Naive thymus-derived CD4-positive, alpha-beta T cell (primary cell): ENCODE measurements at regions of chr3 and their contacts with region 1.

Region 1: DNA sequence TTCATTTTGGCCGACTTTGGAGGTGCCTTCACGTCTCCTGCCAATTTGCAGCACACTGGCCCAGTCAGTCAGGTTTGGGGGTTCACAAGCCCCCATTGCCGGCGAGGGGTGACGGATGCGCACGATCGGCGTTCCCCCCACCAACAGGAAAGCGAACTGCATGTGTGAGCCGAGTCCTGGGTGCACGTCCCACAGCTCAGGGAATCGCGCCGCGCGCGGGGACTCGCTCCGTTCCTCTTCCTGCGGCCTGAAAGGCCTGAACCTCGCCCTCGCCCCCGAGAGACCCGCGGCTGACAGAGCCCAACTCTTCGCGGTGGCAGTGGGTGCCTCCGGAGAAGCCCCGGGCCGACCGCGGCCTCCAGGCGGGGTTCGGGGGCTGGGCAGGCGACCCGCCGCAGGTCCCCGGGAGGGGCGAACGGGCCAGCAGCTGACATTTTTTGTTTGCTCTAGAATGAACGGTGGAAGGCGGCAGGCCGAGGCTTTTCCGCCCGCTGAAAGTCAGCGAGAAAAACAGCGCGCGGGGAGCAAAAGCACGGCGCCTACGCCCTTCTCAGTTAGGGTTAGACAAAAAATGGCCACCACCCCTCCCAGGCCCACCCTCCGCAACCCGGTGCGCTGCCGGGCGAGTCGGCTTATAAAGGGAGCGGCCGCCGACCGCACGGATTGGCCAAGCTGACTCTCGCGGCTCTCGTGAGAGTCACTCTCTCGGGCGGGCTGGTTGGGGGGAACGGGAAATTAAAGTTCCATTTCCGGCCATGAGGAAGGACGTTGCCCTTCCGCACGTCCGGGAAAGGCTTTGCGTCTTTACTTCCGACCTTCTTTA is at the start of gene TERC:
- DNase-seq: peak; percentile 72 to 96 (median 94)
- ATAC-seq: peak; percentile 91
- H3K4me3 ChIP-seq: peak within 1 kb of the TSS; percentile 88
- H3K4me3 Mint-ChIP-seq: peak within 1 kb of the TSS; percentile 89 to 99 (median 98)
- H3K27ac ChIP-seq: peak within 1 kb of the TSS; percentile 98
- H3K27ac Mint-ChIP-seq: peak within 1 kb of the TSS; percentile 96 to 100 (median 99)
- H3K4me1 ChIP-seq: peaks cover 11 to 18% of the 10 kb centered on the region in 2 donors
- H3K4me1 Mint-ChIP-seq: peaks cover 6 to 39% (median 33%) of the 10 kb centered on the region in 7 donors
- H3K27me3 ChIP-seq: no peaks in the 10 kb centered on the region
- H3K27me3 Mint-ChIP-seq: no peaks in the 10 kb centered on the region
- total RNA-seq, gene TERC: 4.0 to 19.4 (median 7.4) TPM

Region 2: DNA sequence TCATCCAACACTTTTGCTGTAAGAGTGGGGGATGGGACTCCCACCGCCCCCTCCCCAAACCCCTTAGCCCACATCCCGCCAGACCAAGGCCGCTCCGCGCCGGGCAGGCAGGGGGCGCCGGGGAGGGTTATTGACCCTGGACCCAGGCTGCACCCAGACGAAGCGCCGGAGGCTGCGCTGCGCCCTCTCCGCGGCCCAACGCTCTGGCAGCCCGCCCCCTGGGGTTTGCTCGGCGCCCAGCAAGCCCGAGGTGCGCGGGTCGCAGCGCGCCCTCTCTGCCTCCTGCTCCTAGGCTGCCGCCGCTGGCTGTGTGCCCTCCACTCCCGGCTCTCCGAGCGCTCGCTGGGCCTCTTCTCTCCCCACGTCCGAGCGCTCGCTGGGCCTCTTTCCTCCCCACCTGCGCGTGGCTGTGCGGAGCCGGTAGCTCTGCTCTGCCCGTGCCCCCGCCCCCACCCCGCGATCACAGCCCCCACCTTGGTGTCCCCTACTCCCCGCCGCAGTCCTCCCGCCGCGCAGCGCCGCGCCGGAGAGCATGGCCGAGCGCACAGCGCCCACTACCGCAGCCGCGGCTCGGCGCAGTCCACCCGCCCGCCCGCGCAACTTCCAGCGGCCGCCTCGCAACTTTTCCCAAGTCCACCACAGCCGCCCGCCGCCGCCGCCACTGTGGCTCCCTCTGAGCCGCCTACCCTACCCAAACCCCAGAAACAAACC is 102.4 kb before region 1 on chr3:
- CTCF ChIA-PET with region 1: no interaction called
- POLR2A ChIA-PET with region 1: interaction called, 3 read pairs
- intact Hi-C with region 1: loop called in 1 of 2 experiments (anchors 5 kb)
- DNase-seq: peak in 2 of 9 donors; percentile 29 to 50
- ATAC-seq: peak; percentile 69
- H3K4me3 ChIP-seq: peak overlapping the region; percentile 60
- H3K4me3 Mint-ChIP-seq: peak overlapping the region; percentile 78 to 92 (median 85)
- H3K27ac ChIP-seq: no peak overlapping the region
- H3K27ac Mint-ChIP-seq: no peak overlapping the region
- H3K4me1 ChIP-seq: peaks cover 18 to 33% of the 10 kb centered on the region in 2 donors
- H3K4me1 Mint-ChIP-seq: peaks cover 35 to 72% (median 45%) of the 10 kb centered on the region in 7 donors
- H3K27me3 ChIP-seq: peaks cover 20 to 84% of the 10 kb centered on the region in 2 donors
- H3K27me3 Mint-ChIP-seq: peaks cover 85 to 93% (median 88%) of the 10 kb centered on the region in 5 donors

Region 3: DNA sequence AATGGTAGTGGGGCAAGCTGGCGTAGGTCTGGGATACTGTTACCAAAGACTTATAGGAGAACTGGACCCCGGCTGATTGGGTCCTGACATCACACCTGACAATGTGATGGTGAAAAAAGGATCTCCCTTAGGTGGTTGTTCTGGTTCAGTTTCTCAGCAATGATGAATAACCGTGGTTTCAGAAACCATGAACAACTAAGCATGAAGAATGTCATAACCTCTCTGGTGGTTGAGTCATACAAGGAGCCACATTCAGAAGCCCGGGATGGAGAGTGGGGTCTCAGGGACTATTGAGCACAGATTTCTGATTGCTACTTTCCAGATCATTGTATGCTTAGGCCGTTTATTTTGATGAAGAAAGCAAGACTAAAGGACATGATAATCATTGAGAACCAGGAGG is 290.5 kb after region 1 on chr3:
- CTCF ChIA-PET with region 1: no interaction called
- POLR2A ChIA-PET with region 1: interaction called, 4 read pairs
- intact Hi-C with region 1: loop called (anchors 1 to 2 kb)
- DNase-seq: no peak
- ATAC-seq: no peak
- H3K4me3 ChIP-seq: no peak overlapping the region
- H3K4me3 Mint-ChIP-seq: no peak overlapping the region
- H3K27ac ChIP-seq: no peak overlapping the region
- H3K27ac Mint-ChIP-seq: peak overlapping the region in 2 of 9 donors; percentile 29 to 42
- H3K4me1 ChIP-seq: peaks cover 0 to 7% of the 10 kb centered on the region in 2 donors
- H3K4me1 Mint-ChIP-seq: peaks cover 6 to 37% (median 23%) of the 10 kb centered on the region in 7 donors
- H3K27me3 ChIP-seq: no peaks in the 10 kb centered on the region
- H3K27me3 Mint-ChIP-seq: no peaks in the 10 kb centered on the region

Region 4: GRCh38 chr3:170180908-170181879 is 416.5 kb after region 1 on chr3 and contains the start of gene PHC3:
- CTCF ChIA-PET with region 1: no interaction called
- POLR2A ChIA-PET with region 1: interaction called, 3 read pairs
- intact Hi-C with region 1: loop called (anchors 1 to 2 kb)
- DNase-seq: peak; percentile 88 to 95 (median 92)
- ATAC-seq: peak; percentile 86
- H3K4me3 ChIP-seq: peak within 1 kb of the TSS; percentile 93
- H3K4me3 Mint-ChIP-seq: peak within 1 kb of the TSS; percentile 88 to 100 (median 99)
- H3K27ac ChIP-seq: peak within 1 kb of the TSS; percentile 98
- H3K27ac Mint-ChIP-seq: peak within 1 kb of the TSS; percentile 96 to 100 (median 100)
- H3K4me1 ChIP-seq: peaks cover 19 to 39% of the 10 kb centered on the region in 2 donors
- H3K4me1 Mint-ChIP-seq: peaks cover 19 to 40% (median 33%) of the 10 kb centered on the region in 7 donors
- H3K27me3 ChIP-seq: no peaks in the 10 kb centered on the region
- H3K27me3 Mint-ChIP-seq: peaks cover 0 to 2% (median 0%) of the 10 kb centered on the region in 5 donors
- total RNA-seq, gene PHC3: 78.9 to 215 (median 158) TPM

Region 5: GRCh38 chr3:170301405-170301804 is 536.7 kb after region 1 on chr3:
- CTCF ChIA-PET with region 1: no interaction called
- POLR2A ChIA-PET with region 1: no interaction called
- intact Hi-C with region 1: loop called in 1 of 2 experiments (anchors 5 kb)
- DNase-seq: no peak
- ATAC-seq: no peak
- H3K4me3 ChIP-seq: no peak overlapping the region
- H3K4me3 Mint-ChIP-seq: no peak overlapping the region
- H3K27ac ChIP-seq: no peak overlapping the region
- H3K27ac Mint-ChIP-seq: no peak overlapping the region
- H3K4me1 ChIP-seq: no peaks in the 10 kb centered on the region
- H3K4me1 Mint-ChIP-seq: no peaks in the 10 kb centered on the region
- H3K27me3 ChIP-seq: no peaks in the 10 kb centered on the region
- H3K27me3 Mint-ChIP-seq: no peaks in the 10 kb centered on the region

Region 6: GRCh38 chr3:170811928-170812591 is 1047.4 kb after region 1 on chr3:
- CTCF ChIA-PET with region 1: interaction called, 4 read pairs
- POLR2A ChIA-PET with region 1: interaction called, 4 read pairs
- intact Hi-C with region 1: loop called (anchors 1 to 5 kb)
- DNase-seq: peak; percentile 17 to 77 (median 68)
- ATAC-seq: peak; percentile 92
- H3K4me3 ChIP-seq: no peak overlapping the region
- H3K4me3 Mint-ChIP-seq: no peak overlapping the region
- H3K27ac ChIP-seq: no peak overlapping the region
- H3K27ac Mint-ChIP-seq: no peak overlapping the region
- H3K4me1 ChIP-seq: no peaks in the 10 kb centered on the region
- H3K4me1 Mint-ChIP-seq: peaks cover 0 to 8% (median 0%) of the 10 kb centered on the region in 7 donors
- H3K27me3 ChIP-seq: no peaks in the 10 kb centered on the region
- H3K27me3 Mint-ChIP-seq: peaks cover 0 to 6% (median 0%) of the 10 kb centered on the region in 5 donors

Region 7: DNA sequence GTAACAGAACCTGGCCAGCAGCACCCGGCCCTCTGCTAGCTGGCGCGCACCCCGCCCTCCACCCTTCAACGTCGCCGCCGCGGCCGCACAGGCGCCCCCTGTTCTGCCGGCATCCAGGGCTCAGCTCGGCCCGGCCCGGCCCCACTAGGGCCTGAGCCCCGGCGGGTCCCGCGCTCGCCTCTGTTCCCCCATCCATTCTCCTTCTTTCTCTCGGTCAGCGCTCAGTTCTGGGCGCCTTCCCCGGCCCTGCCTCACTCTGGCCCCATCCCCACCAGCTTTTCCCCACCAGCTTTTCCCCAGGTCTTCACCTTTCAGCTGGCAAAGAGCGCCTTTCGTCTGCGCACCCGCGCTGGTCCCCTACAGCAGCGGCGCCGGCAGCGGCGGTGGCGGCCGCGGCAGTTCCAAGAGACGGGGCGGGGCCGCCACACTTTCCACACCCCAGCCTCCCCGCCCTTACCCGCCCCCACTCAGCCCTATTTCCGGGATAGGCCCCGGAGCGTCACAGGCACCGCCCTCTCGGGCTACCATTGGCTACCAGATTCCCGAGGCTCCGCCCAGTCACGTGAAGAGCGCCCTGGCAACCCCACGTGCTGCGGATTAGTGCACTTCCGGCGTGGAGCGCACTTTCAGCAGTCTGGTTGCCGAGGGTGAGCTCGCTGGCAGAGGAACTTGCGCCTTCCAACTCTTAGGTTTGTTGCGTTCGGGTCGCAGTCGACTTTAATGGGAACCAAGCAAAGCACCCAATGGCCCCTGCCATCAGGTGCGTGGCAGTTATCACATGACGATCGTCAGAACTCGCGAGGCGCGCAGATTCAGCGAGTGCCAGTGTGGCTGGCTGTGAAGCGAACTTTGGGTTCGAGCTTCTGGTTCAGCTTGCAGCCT is 1143.8 kb after region 1 on chr3 and contains the start of gene EIF5A2:
- CTCF ChIA-PET with region 1: no interaction called
- POLR2A ChIA-PET with region 1: no interaction called
- intact Hi-C with region 1: loop called in 1 of 2 experiments (anchors 1 kb)
- DNase-seq: peak; percentile 87 to 97 (median 94)
- ATAC-seq: peak; percentile 98
- H3K4me3 ChIP-seq: peak within 1 kb of the TSS; percentile 50
- H3K4me3 Mint-ChIP-seq: peak within 1 kb of the TSS; percentile 90 to 98 (median 96)
- H3K27ac ChIP-seq: peak within 1 kb of the TSS; percentile 68
- H3K27ac Mint-ChIP-seq: peak within 1 kb of the TSS; percentile 89 to 96 (median 94)
- H3K4me1 ChIP-seq: peaks cover 15 to 16% of the 10 kb centered on the region in 2 donors
- H3K4me1 Mint-ChIP-seq: peaks cover 0 to 31% (median 22%) of the 10 kb centered on the region in 7 donors
- H3K27me3 ChIP-seq: no peaks in the 10 kb centered on the region
- H3K27me3 Mint-ChIP-seq: peaks cover 0 to 19% (median 0%) of the 10 kb centered on the region in 5 donors
- total RNA-seq, gene EIF5A2: 5.5 to 9.8 (median 7.4) TPM